Calu3 (cell line): ENCODE measurements at regions of chr5 and their contacts with region 1.

Region 1: GRCh38 chr5:131634996-131635754 is at the start of gene RAPGEF6:
- DNase-seq: peak; percentile 97
- H3K4me3 Mint-ChIP-seq: no peak within 1 kb of the TSS
- H3K27ac Mint-ChIP-seq: peak within 1 kb of the TSS; percentile 94
- H3K4me1 Mint-ChIP-seq: no peaks in the 10 kb centered on the region
- H3K27me3 Mint-ChIP-seq: no peaks in the 10 kb centered on the region
- CTCF ChIP-seq: peak; percentile 21
- total RNA-seq, gene RAPGEF6: 21.6 and 27.3 TPM in 2 replicates

Region 2: DNA sequence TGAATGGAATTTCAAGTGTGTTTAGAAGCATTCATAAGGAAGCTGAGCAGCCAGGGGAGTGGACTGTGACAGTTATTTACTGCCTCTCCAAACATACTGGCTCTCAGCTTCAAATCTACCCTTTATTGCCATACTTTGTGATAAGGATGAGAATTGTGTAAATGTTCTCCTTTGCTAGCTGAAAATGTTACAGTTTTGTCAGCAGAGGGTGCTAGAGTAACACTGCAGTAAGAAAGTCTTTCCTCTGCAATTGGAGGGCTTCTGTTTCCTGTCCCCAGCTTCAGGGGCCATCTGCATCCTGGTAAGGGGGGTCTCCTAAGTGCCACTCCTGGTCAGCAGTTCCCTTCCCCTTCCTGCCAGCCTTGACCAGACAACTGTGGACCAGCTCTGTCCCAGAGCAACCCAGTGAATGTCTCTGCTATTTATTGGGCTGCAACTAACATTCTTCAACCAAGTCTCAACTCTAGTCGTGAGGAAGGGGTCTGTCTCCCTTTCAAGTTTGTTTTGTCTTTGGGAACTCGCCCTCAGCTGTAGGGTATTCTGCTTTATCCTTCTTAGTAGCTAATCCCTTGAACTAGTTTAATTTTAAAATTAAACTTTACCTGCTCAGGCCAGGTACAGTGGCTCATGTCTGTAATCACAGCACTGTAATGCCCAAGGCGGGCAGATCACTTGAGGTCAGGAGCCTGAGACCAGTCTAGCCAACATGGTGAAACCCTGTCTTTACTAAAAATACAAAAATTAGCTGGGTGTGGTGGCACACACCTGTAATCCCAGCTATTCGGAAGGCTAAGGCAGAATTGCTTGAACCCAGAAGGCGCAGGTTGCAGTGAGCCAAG is 45.4 kb before region 1 on chr5:
- CTCF ChIA-PET with region 1: no interaction called
- intact Hi-C with region 1: loop called (anchors 1 kb)
- DNase-seq: peak; percentile 30
- H3K4me3 Mint-ChIP-seq: no peak overlapping the region
- H3K27ac Mint-ChIP-seq: no peak overlapping the region
- H3K4me1 Mint-ChIP-seq: peaks cover 24% of the 10 kb centered on the region
- H3K27me3 Mint-ChIP-seq: no peaks in the 10 kb centered on the region
- CTCF ChIP-seq: peak; percentile 86